ENCODE measurements at regions of chr15 and their contacts with region 1.

Region 1: DNA sequence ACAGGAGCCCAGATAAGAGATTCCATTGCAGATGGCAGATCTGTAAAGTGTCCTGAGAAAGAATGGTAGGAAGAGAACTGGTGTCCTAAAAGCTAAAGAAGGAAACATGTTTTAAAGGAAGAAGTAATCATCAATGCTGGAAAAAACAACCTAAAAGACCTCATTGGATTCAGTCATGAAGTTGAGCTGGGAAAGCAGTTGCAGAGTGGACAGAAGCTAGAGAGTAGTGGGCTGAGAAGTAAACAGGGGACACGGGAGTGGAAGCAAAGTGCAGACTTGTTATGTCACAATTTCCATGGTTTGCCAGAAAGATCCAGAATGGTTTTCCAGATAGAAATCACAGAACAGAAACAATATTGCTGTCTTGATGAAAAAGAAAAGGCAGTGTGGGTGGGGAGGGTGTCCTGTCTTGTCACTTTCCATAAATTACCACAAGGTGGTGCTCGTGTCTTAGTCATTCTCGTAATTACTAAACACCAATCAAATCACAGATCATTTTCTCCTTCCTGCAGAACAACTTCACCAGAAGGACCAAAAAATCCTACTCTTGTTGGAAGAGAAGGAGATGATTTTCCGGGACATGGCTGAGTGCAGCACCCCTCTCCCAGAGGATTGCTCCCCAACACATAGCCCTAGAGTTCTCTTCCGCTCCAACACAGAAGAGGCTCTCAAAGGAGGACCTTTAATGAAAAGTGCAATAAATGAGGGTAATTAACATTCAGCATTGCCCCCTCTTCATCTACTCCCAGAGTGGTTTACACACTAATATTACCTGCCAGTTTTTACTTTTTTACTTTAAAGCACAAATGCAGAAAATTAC is 64.5 kb downstream of the KLHL25 start:
- DNase-seq: no peak
- H3K4me3 ChIP-seq: no peak overlapping the region
- CTCF ChIP-seq: peak; percentile 54

Region 2: DNA sequence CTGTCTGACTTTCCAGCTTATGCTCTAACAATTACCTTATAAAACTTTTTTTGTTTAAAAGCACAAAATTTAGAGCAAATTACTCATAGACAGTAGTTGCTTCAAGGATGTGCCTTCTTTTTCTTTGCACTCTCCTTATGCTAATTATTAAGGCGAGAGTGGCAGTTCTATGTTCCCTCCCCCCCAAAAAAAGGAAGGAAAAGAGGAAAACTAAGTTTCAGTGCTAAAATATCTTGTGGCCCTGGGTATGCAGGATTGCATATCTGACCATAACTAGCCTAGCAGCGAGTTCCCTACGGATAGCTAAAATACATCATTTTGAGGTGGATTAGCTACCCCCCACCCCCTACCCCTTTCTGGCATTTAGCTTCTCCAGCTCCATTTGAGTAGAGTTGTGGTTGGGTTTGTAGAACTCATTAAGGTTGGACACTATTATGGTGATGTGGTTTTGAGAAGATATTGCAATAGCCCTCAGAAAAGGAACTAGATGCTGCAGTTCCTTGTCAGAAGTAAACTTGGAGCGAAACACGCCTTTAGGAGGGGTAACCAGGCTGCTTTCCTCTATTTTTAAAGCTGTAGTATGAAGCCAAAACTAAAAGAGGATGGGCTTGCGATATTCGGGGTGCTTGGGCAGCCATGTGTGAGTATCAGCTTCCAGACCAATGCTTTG is 175.2 kb before region 1 on chr15:
- CTCF ChIA-PET with region 1: no interaction called
- POLR2A ChIA-PET with region 1: no interaction called
- DNase-seq: no peak
- H3K4me3 ChIP-seq: no peak overlapping the region
- CTCF ChIP-seq: no peak

Region 3: GRCh38 chr15:85742186-85742821 is 12.1 kb after region 1 on chr15:
- CTCF ChIA-PET with region 1: interaction called, 55 read pairs
- POLR2A ChIA-PET with region 1: no interaction called
- DNase-seq: peak; percentile 34
- H3K4me3 ChIP-seq: no peak overlapping the region
- CTCF ChIP-seq: no peak

Region 4: DNA sequence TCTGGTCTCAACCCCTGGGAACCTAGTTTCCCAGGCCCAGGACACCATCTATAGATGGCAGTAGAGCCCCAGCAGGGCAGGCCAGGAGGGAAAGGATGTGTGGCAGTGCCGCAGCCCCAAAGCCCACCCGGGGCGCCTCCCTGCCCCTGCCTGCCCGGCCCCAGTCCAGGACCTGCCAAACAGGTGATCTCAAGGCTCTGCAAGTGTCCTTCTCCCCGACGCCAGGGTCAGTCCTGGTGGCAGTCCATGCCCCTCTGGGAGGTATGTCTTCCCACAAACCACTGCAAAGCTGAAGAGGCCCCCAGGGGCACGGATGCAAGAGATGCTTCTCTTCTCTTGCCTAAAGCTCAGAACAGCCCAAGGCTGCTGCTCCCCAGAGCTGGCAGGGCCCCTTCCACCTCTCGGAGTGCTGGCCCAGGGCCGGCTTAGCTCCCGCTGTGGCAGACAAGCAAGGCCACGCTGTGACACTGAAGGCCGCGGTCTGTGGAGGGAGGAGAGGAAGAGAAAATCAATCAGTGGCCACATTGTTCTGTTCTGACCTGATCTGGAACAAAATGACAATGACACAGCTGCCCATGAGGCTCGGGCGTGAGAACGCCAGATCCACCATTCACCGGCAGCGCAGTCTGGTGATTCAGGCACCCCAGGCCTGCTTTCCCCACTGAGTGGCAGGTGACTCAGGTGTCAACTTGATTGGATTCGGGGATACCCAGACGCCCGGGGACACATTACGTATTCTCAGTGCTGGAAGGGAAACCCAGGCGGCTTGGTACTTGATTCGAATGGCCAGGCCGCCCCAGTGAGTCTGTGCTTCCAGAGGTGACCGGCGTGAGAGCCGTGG is 30.5 kb after region 1 on chr15:
- CTCF ChIA-PET with region 1: no interaction called
- POLR2A ChIA-PET with region 1: no interaction called
- DNase-seq: no peak
- H3K4me3 ChIP-seq: no peak overlapping the region
- CTCF ChIP-seq: no peak

Region 5: DNA sequence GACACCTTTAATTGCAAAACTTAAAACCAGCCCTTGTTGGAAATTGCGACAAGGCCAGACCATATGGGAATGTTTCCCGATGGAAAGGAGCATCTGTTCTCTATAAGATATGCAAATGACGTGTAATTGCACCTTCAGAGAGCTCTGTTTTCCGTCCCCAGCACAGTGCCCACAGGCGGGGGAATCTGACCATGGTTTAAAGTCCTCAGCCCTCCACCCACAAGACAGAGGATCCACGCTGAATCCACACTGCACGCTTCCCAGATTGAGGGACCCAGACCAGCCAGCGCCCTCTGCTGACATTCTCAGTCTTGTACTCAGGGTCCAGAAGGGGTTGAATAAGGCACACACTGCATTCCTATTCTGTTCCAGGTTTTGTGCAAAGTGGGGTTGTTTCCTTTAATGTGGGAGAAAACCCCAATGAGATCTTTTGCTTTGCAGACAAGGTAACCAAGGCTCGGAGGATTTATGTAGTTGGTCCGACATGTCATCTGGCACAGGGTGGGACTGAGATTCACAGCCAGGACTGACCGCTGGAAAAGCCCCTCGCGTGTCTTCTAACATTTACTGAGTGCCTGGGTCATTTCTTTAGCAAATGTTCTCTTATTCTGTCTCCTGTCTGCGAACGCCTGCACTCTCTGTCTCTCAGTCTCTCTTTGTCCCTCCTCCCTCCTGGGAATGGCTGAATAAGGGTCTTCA is 101.4 kb after region 1 on chr15:
- CTCF ChIA-PET with region 1: interaction called, 99 read pairs
- POLR2A ChIA-PET with region 1: no interaction called
- DNase-seq: no peak
- H3K4me3 ChIP-seq: no peak overlapping the region
- CTCF ChIP-seq: peak; percentile 77

Measured in AG04449 (cell line).